HepG2 (cell line): ENCODE measurements at regions of chr2 and their contacts with region 1.

Region 1: DNA sequence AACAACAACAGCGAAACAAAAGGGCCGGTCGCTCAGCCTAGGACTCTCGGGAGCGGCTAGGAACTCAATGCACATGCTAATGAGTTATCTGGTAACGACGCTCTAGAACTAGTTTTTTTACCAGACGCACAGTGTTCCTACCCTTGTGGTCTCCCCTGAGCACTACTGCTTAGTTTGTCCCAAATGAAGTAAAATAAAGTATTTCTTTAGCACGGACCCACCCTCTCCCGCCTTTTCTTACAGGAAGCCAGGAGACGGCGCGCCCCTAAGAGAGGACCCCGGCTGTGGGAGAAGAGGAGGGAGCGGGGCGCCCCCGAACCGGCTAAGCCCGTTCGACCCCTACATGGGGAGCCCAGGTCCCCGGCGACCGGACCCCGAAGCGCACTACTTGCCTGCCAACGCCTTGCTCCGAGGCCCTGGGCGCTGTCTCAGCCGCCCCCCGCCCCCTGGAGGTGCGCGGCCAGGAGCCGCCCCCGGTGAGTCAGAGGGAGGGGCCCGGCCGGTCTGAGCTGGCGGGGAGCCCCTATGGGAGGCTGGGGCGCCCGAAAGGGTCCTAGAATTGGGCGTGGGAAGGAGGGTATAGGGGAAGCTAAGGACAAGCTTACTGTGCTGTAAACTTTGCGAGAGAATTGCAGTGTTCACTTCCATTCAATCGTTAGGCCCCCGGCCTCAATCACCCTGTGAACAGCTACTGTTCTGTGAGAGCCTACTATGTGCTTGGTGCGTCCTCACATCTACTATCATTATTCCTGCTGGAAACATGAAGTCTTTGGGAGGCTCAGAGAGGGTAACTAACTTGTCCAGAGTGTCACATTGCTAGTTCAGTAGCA is 3.6 kb upstream of the CAPG start:
- DNase-seq: no peak
- ATAC-seq: no peak
- H3K4me3 ChIP-seq: no peak overlapping the region
- H3K27ac ChIP-seq: no peak overlapping the region
- H3K4me1 ChIP-seq: peaks cover 74% of the 10 kb centered on the region
- H3K27me3 ChIP-seq: no peaks in the 10 kb centered on the region
- CTCF ChIP-seq: no peak
- EP300 ChIP-seq: no peak
- POLR2A ChIP-seq: no peak
- RAD21 ChIP-seq: no peak

Region 2: GRCh38 chr2:85369500-85369899 is 44.3 kb before region 1 on chr2:
- CTCF ChIA-PET with region 1: no interaction called
- POLR2A ChIA-PET with region 1: interaction called, 15 read pairs
- in situ Hi-C with region 1: no loop called
- intact Hi-C with region 1: loop called (anchors 2 kb)
- DNase-seq: no peak
- ATAC-seq: no peak
- H3K4me3 ChIP-seq: no peak overlapping the region
- H3K27ac ChIP-seq: no peak overlapping the region
- H3K4me1 ChIP-seq: peaks cover 48% of the 10 kb centered on the region
- H3K27me3 ChIP-seq: no peaks in the 10 kb centered on the region
- CTCF ChIP-seq: no peak
- EP300 ChIP-seq: no peak
- POLR2A ChIP-seq: no peak
- RAD21 ChIP-seq: no peak

Region 3: DNA sequence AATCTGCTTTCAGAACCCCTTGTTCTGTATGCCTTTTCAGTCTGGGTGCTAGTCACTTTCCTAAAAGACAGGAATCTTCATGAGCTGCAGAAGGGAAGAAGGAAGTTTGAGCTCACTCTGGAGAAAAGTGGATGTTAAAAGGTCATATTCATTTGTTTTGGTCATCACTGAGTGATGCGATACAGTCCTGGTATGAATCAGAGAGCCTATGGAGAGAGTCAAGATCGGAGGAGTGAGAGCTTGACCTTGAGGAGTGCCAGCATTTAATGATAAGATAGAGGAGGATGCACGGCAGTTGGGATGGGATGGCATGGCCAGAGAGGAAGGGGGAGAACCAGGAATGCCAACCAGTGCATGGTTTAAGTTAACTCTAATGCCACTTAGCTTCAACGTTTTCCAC is 221.8 kb after region 1 on chr2:
- CTCF ChIA-PET with region 1: no interaction called
- POLR2A ChIA-PET with region 1: no interaction called
- in situ Hi-C with region 1: no loop called
- intact Hi-C with region 1: no loop called
- DNase-seq: no peak
- ATAC-seq: no peak
- H3K4me3 ChIP-seq: no peak overlapping the region
- H3K27ac ChIP-seq: no peak overlapping the region
- H3K4me1 ChIP-seq: no peaks in the 10 kb centered on the region
- H3K27me3 ChIP-seq: no peaks in the 10 kb centered on the region
- CTCF ChIP-seq: no peak
- EP300 ChIP-seq: no peak
- POLR2A ChIP-seq: no peak
- RAD21 ChIP-seq: no peak